Pancreas (tissue), 10 donors: ENCODE measurements at regions of chr9 and their contacts with region 1.

Region 1: DNA sequence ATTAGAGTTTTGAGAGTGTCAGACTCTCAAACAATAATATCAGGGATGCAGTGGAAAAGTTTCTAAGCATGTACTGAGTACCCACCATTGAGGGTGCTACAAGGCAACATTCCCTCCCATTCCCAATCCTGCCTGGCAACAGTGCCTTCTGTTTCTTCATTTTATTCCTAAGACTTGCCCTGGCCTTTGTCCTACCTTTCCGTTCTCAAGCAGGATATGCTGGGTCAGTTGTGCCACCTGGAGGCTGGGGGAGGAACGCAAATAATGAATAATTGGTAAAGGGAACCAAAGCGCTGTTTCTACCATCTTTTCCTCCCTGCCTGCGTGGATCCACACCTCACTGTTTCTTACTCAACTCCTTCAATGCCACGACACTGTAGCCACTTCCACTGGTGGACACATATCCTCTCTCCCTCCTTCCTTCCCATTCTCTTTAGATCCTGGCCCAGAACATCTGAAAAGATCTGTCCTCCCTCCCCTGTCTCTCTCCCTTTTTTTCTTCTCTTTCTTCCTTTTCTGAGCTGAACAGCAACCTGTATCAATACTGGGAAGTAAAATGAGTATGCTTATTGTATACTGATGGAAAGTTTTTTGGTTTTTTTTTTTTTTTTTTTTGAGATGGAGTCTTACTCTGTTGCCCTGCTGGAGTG is 149.5 kb downstream of the C9orf152 start:
- DNase-seq: peak in 3 of 6 donors; percentile 18 to 46 (median 28)
- ATAC-seq: peak in 3 of 4 donors; percentile 79 to 86 (median 83)
- H3K4me3 ChIP-seq: no peak overlapping the region
- H3K27ac ChIP-seq: no peak overlapping the region
- H3K4me1 ChIP-seq: no peaks in the 10 kb centered on the region
- H3K27me3 ChIP-seq: no peaks in the 10 kb centered on the region
- CTCF ChIP-seq: peak in 3 of 4 donors; percentile 12 to 32 (median 25)

Region 2: GRCh38 chr9:109903515-109904138 is 154.8 kb before region 1 on chr9:
- intact Hi-C with region 1: loop called in 2 of 3 experiments (anchors 5 to 10 kb)
- DNase-seq: peak in 3 of 6 donors; percentile 32 to 68 (median 46)
- ATAC-seq: peak; percentile 67 to 92 (median 88)
- H3K4me3 ChIP-seq: no peak overlapping the region
- H3K27ac ChIP-seq: no peak overlapping the region
- H3K4me1 ChIP-seq: no peaks in the 10 kb centered on the region
- H3K27me3 ChIP-seq: no peaks in the 10 kb centered on the region
- CTCF ChIP-seq: peak; percentile 10 to 67 (median 52)

Region 3: DNA sequence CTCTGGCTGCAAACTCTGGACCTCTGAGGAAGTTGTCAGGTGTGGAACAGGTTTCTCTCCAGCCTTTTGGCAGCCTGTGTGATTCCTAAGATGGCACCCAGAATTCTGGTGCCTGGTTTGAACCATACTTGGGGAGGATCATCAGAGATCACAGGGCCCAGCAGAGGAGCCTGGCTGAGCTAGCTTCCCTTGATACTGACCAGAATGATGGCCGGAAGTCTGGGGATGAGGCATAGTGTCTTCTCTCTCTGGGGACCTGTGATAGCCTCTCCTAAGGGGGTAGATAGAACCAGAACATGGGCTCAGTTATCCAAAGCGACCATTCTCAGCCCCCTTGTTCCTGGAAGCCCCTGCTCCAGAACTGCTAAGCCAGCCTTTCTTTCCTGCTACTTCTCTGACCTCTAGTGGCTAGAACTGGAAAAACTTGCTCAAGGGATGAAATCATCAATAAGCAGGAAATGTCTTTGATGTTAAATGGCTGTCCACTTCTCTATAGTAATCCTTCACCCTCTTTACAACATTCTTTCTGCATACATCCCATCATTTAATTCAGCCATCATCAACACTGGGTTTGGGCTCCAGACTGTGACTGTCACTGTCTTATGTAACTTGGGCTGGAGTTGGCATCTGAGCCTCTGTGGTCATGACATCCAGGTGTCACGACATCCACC is 94.4 kb after region 1 on chr9:
- intact Hi-C with region 1: loop called in 1 of 3 experiments (anchors 5 kb)
- DNase-seq: no peak
- ATAC-seq: peak; percentile 55 to 78 (median 68)
- H3K4me3 ChIP-seq: no peak overlapping the region
- H3K27ac ChIP-seq: no peak overlapping the region
- H3K4me1 ChIP-seq: no peaks in the 10 kb centered on the region
- H3K27me3 ChIP-seq: no peaks in the 10 kb centered on the region
- CTCF ChIP-seq: peak; percentile 22 to 54 (median 48)